Calu3 (cell line): ENCODE measurements at regions of chr19 and their contacts with region 1.

Region 1: DNA sequence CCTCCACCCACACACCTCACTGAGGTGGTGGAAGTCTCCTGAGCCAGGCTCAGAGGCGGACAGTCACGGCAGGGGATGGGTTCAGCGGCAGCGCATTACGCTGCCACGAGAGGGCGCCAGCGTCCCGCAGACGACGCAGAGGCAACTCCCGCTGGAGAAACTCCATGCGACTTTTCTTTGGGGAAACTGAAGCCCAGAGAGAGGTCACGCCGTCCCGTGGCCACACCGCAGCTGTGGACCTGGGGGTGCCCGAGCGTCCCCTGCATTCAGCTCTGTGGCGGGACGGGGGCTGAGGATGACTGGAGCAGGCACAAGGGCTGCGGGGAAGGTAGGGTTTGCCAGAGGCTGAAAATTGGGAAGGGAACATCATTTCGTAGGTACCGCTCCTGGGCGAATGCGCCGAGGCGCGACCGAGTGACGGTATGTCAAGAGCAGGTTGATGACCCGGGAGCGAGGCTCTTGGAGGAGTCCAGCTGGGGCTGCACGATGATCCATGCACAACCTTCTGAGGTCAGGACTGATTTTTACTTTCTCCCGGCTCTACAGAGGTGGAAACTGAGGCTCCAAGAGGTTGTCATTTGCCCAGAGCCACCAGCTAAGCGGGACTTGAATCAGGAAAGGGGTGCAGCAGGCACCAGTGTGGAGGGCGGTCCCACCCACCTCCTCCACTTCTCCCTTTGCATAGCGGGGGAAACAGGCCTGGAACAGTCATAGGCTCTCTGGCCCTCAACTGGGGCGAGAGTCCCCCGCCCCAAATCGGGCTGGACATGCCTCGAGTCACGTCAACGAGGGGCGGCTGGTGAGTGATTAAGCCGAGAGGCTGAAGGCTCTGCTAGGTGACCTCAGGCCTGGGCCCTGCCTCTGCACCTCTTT is 690 bp upstream of the ARRDC2 start:
- DNase-seq: peak; percentile 84
- H3K4me3 Mint-ChIP-seq: peak overlapping the region; percentile 72
- H3K27ac Mint-ChIP-seq: peak overlapping the region; percentile 30
- H3K4me1 Mint-ChIP-seq: peaks cover 11% of the 10 kb centered on the region
- H3K27me3 Mint-ChIP-seq: no peaks in the 10 kb centered on the region
- CTCF ChIP-seq: peak; percentile 76

Region 2: DNA sequence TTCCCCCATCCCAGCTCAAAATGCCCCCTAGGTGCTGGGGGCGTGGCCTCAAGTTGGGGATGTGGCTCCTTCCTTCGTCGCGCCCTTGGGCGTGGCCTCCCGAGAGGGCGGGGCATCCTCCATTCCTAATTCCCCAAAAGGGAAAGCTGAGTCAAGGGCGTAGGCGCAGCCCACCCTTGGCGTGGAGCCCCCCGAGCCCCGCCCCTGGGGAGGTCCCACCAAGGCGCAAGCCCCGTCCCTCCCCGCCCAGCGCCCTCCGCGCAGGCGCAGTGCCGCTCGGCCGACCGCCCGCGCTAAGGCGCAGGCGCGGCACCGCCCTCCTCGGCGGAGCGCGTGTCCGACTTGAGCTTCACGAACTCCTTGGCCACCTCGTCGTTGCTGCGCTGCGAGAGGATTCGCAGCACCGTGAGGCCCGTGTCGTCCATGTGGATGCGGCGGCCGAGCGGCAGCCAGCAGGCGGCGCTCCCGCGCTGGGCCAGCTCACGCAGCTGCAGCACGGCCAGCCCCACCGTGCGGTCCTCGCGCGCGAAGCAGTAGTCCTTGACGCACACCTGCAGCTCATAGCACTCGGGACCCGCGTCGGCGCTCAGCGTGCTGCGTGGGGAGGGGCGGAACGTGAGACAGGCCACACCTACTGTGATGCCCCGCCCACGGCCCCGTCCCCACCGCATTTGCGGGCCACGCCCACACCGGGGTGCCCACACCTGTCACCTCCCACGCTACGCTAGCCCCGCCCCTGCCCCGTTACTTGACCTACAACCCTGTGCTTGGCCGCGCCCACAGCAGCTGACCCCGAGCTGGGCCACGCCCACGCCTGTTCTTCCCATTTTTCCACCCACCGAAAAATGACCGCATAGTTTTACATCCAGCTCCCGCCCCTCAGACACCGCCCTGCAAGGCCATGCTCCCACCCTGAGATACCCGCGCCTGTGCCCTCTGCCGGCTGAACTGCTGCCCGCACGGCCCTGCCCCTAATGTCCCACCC is 401.2 kb before region 1 on chr19:
- CTCF ChIA-PET with region 1: no interaction called
- intact Hi-C with region 1: no loop called
- DNase-seq: peak; percentile 86
- H3K4me3 Mint-ChIP-seq: peak overlapping the region; percentile 83
- H3K27ac Mint-ChIP-seq: peak overlapping the region; percentile 74
- H3K4me1 Mint-ChIP-seq: peaks cover 6% of the 10 kb centered on the region
- H3K27me3 Mint-ChIP-seq: peaks cover 40% of the 10 kb centered on the region
- CTCF ChIP-seq: peak; percentile 12

Region 3: GRCh38 chr19:17947815-17948513 is 59.3 kb before region 1 on chr19:
- CTCF ChIA-PET with region 1: no interaction called
- intact Hi-C with region 1: no loop called
- DNase-seq: peak; percentile 92
- H3K4me3 Mint-ChIP-seq: peak overlapping the region; percentile 82
- H3K27ac Mint-ChIP-seq: peak overlapping the region; percentile 58
- H3K4me1 Mint-ChIP-seq: peaks cover 29% of the 10 kb centered on the region
- H3K27me3 Mint-ChIP-seq: peaks cover 45% of the 10 kb centered on the region
- CTCF ChIP-seq: no peak

Region 4: GRCh38 chr19:18058208-18059030 is 51.1 kb after region 1 on chr19:
- CTCF ChIA-PET with region 1: interaction called, 3 read pairs
- intact Hi-C with region 1: loop called (anchors 1 kb)
- DNase-seq: peak; percentile 79
- H3K4me3 Mint-ChIP-seq: no peak overlapping the region
- H3K27ac Mint-ChIP-seq: peak overlapping the region; percentile 52
- H3K4me1 Mint-ChIP-seq: peaks cover 8% of the 10 kb centered on the region
- H3K27me3 Mint-ChIP-seq: no peaks in the 10 kb centered on the region
- CTCF ChIP-seq: peak; percentile 87